Activated CD8-positive, alpha-beta memory T cell treated with anti-CD3 and anti-CD28 coated beads, Interleukin-2, amount 10 ng/mL, durations not matched to agents 7 days and 5 days (primary cell): ENCODE measurements at regions of chr17 and their contacts with region 1.

Region 1: GRCh38 chr17:3012926-3013581 is 50.4 kb downstream of the OR1D5 start:
- DNase-seq: peak; percentile 65
- ATAC-seq: peak; percentile 70
- H3K4me3 Mint-ChIP-seq: no peak overlapping the region
- H3K27ac Mint-ChIP-seq: no peak overlapping the region
- H3K4me1 Mint-ChIP-seq: no peaks in the 10 kb centered on the region
- H3K27me3 Mint-ChIP-seq: no peaks in the 10 kb centered on the region

Region 2: GRCh38 chr17:2682176-2682938 is 330.7 kb before region 1 on chr17:
- CTCF ChIA-PET with region 1: no interaction called
- DNase-seq: no peak
- ATAC-seq: no peak
- H3K4me3 Mint-ChIP-seq: no peak overlapping the region
- H3K27ac Mint-ChIP-seq: no peak overlapping the region
- H3K4me1 Mint-ChIP-seq: peaks cover 2% of the 10 kb centered on the region
- H3K27me3 Mint-ChIP-seq: no peaks in the 10 kb centered on the region

Region 3: GRCh38 chr17:2828397-2829038 is 184.5 kb before region 1 on chr17:
- CTCF ChIA-PET with region 1: interaction called, 13 read pairs
- DNase-seq: peak; percentile 82
- ATAC-seq: peak; percentile 92
- H3K4me3 Mint-ChIP-seq: no peak overlapping the region
- H3K27ac Mint-ChIP-seq: no peak overlapping the region
- H3K4me1 Mint-ChIP-seq: peaks cover 14% of the 10 kb centered on the region
- H3K27me3 Mint-ChIP-seq: peaks cover 19% of the 10 kb centered on the region

Region 4: GRCh38 chr17:2847381-2848333 is 165.4 kb before region 1 on chr17:
- CTCF ChIA-PET with region 1: interaction called, 12 read pairs
- DNase-seq: no peak
- ATAC-seq: no peak
- H3K4me3 Mint-ChIP-seq: no peak overlapping the region
- H3K27ac Mint-ChIP-seq: no peak overlapping the region
- H3K4me1 Mint-ChIP-seq: peaks cover 11% of the 10 kb centered on the region
- H3K27me3 Mint-ChIP-seq: peaks cover 28% of the 10 kb centered on the region

Region 5: GRCh38 chr17:2985318-2985717 is 27.7 kb before region 1 on chr17:
- CTCF ChIA-PET with region 1: no interaction called
- DNase-seq: no peak
- ATAC-seq: no peak
- H3K4me3 Mint-ChIP-seq: no peak overlapping the region
- H3K27ac Mint-ChIP-seq: no peak overlapping the region
- H3K4me1 Mint-ChIP-seq: no peaks in the 10 kb centered on the region
- H3K27me3 Mint-ChIP-seq: no peaks in the 10 kb centered on the region